ENCODE measurements at regions of chr5 and their contacts with region 1.

Region 1: GRCh38 chr5:172106511-172107356 is 81.3 kb downstream of the STK10 start:
- DNase-seq: peak; percentile 44 to 85 (median 85)
- ATAC-seq: peak; percentile 14 to 36
- H3K4me3 ChIP-seq: no peak overlapping the region
- H3K27ac ChIP-seq: no peak overlapping the region
- H3K4me1 ChIP-seq: peaks cover 20% of the 10 kb centered on the region
- H3K27me3 ChIP-seq: no peaks in the 10 kb centered on the region

Region 2: GRCh38 chr5:172283020-172283861 is 176.5 kb after region 1 on chr5 and contains the start of gene UBTD2:
- intact Hi-C with region 1: loop called in 2 of 4 experiments (anchors 5 to 10 kb)
- DNase-seq: peak; percentile 86 to 95 (median 94)
- ATAC-seq: peak; percentile 86 to 93
- H3K4me3 ChIP-seq: peak within 1 kb of the TSS; percentile 79
- H3K27ac ChIP-seq: peak within 1 kb of the TSS; percentile 99
- H3K4me1 ChIP-seq: no peaks in the 10 kb centered on the region
- H3K27me3 ChIP-seq: no peaks in the 10 kb centered on the region
- total RNA-seq, gene UBTD2: 9.9 to 11.4 (median 10.8) TPM

Region 3: DNA sequence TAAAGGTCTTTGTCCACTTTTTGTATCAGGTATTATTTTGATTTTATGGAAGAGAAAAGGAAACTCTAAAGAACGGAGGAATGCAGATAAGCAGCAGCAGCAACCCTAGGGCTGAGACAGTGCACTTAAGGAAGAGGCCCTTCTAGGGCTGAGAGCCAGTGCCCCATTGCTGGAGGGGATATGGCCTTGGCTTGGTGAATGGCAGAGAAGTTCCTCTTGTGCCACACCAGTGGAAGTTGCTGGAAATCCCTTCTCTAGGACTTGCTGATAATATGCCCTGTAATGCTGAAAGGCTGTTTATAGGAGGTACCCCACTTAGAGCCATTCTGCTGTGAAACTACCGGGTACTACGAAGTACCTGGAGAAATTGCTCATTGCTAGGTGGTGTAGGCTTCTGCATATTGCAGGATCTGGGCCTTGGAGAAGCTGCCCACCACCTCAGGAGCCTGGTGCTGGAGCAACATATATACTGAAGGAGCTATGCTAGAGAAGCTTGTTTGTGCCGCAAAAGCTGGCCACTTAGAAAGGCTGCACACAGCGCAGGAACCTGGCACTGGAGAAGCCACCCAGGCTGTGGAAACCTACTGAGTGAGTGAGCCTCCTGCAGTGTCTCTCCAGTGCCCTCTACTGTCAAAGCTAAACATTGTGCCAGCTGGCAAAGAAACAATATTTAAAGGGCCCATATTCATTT is 186.5 kb after region 1 on chr5:
- intact Hi-C with region 1: loop called in 2 of 4 experiments (anchors 10 kb)
- DNase-seq: peak; percentile 61 to 81 (median 76)
- ATAC-seq: peak; percentile 92 to 95
- H3K4me3 ChIP-seq: no peak overlapping the region
- H3K27ac ChIP-seq: no peak overlapping the region
- H3K4me1 ChIP-seq: no peaks in the 10 kb centered on the region
- H3K27me3 ChIP-seq: no peaks in the 10 kb centered on the region

Measured in right cardiac atrium (tissue), 5 donors.